ENCODE measurements at regions of chr11 and their contacts with region 1.

Region 1: GRCh38 chr11:62601394-62602140 is at the start of gene MTA2:
- H3K4me3 Mint-ChIP-seq: peak within 1 kb of the TSS; percentile 85
- H3K27ac Mint-ChIP-seq: peak within 1 kb of the TSS; percentile 90
- H3K4me1 Mint-ChIP-seq: peaks cover 72% of the 10 kb centered on the region
- H3K27me3 Mint-ChIP-seq: no peaks in the 10 kb centered on the region

Region 2: GRCh38 chr11:62245271-62245753 is 356.3 kb before region 1 on chr11:
- intact Hi-C with region 1: no loop called
- H3K4me3 Mint-ChIP-seq: no peak overlapping the region
- H3K27ac Mint-ChIP-seq: no peak overlapping the region
- H3K4me1 Mint-ChIP-seq: no peaks in the 10 kb centered on the region
- H3K27me3 Mint-ChIP-seq: peaks cover 24% of the 10 kb centered on the region

Region 3: GRCh38 chr11:62573592-62574362 is 27.8 kb before region 1 on chr11 and contains the start of gene EEF1G:
- intact Hi-C with region 1: no loop called
- H3K4me3 Mint-ChIP-seq: peak within 1 kb of the TSS; percentile 98
- H3K27ac Mint-ChIP-seq: peak within 1 kb of the TSS; percentile 96
- H3K4me1 Mint-ChIP-seq: peaks cover 49% of the 10 kb centered on the region
- H3K27me3 Mint-ChIP-seq: no peaks in the 10 kb centered on the region

Region 4: DNA sequence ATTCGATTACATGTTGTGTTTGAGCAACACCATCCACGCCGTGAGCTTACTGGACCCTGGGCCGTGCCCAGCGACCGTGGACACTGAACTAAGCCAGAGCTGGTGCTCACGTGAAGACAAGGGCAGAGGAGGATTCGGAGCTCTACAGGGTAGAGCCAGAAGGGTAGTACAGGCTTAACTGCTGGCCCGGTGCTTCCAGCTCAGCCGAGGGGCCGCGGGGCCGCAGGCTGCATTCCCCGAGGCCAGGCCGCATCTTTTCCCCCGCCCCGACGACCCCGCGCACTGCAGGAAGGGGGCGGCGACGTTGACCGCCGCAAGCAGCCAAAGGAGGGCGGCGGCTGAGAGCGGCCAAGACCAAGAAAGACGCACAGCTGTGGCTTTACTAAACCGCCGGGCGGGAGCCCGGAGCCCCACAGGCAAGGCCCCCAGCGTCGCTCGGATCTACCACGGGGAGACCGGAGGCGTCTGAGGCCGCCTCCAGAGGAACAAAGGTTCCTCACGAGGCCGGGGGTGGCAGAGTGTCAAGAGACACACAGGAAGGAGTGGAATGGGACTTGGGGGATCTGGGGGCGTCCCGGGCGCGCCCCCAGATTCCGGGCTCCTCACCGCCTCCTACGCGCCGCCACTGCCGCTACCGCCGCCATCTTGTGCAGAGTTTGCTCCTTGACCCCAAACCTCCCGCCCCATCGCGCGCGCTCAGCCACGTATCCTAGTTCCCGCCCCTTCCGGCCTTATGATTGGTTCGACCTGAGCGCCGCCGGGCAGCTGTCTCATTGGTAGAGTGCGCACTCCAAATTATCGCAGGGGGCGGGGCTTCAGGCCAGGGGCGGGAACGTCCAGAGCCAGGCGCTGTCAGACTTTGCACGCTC is 44.6 kb after region 1 on chr11 and contains the start of gene GANAB:
- intact Hi-C with region 1: loop called (anchors 1 kb)
- H3K4me3 Mint-ChIP-seq: peak within 1 kb of the TSS; percentile 95
- H3K27ac Mint-ChIP-seq: peak within 1 kb of the TSS; percentile 93
- H3K4me1 Mint-ChIP-seq: peaks cover 39% of the 10 kb centered on the region
- H3K27me3 Mint-ChIP-seq: no peaks in the 10 kb centered on the region

Measured in dendritic cell treated with granulocyte-macrophage colony-stimulating factor and Interleukin-4, amounts not matched to agents 40 ng/mL and 50 ng/mL, for 4 days (primary cell).